ENCODE measurements at regions of chr12 and their contacts with region 1.

Region 1: DNA sequence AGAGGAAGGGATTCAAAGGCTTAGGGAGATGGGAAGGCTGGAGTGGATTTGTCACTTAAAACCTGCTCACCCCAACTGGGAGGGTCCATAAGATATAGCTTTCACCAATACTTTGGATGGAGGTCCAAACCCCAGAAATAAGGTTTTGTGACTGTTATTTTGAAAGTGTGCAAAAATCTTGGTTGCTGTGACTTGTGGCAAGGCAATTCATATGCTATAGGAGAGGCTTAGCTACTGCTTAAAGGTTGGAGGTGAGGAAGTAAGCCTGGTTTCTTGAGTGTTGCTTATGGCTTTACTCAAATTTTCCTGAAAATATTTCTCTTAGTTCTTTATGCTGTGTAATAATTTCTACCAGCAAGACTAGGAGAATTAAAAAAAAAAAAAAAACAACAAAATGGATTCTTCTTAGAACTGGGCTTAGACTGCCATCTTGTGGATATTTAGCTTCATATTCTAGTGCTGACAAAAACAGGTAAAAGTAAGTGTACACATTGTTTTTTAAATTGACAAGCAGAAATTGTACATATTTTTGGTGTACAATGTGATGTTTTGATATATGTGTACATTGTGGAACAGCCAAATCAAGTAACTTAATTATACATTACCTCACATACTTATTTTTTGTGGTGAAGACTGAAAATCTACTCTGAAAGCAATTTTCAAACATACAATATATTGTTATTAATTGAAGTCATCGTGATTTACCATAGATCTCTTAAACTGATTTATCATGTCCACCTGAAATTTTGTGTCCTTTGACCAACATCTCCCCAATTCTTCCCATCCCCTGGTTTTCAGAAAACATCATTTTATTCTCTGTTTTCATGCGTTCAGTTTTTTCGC is 23.0 kb downstream of the PDE6H start:
- DNase-seq: no peak
- H3K4me3 ChIP-seq: no peak overlapping the region
- H3K27ac ChIP-seq: no peak overlapping the region
- H3K4me1 ChIP-seq: peaks cover 9% of the 10 kb centered on the region
- H3K27me3 ChIP-seq: no peaks in the 10 kb centered on the region
- CTCF ChIP-seq: peak; percentile 75

Region 2: DNA sequence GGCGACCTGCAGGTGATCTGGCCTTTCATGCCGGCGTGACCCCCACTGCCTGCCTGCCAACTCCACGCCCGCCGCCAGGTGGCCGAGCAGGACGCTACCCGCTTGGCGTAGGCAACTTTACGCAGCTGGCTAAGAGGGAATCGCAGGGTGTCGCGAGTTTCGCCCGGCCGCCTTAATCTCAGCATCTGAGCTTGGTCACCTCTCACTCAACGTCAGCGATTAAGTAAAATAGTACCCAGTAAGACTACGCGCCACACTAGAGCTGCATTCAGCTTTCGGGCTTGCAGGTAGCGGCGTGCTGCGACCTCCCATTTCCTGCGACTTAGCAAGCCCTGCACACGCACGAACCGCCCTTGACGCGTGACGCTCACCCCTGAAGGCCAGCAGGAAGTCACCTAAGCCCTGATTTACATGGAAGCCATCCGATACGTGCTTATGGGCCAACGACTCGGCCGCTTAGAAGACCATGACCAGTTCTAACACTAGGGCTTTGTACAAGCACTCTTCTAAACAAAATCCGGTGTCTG is 225.8 kb before region 1 on chr12:
- intact Hi-C with region 1: loop called (anchors 5 kb)
- DNase-seq: peak; percentile 77
- H3K4me3 ChIP-seq: peak overlapping the region; percentile 77
- H3K27ac ChIP-seq: peak overlapping the region; percentile 95
- H3K4me1 ChIP-seq: peaks cover 55% of the 10 kb centered on the region
- H3K27me3 ChIP-seq: no peaks in the 10 kb centered on the region
- CTCF ChIP-seq: peak; percentile 86

Region 3: DNA sequence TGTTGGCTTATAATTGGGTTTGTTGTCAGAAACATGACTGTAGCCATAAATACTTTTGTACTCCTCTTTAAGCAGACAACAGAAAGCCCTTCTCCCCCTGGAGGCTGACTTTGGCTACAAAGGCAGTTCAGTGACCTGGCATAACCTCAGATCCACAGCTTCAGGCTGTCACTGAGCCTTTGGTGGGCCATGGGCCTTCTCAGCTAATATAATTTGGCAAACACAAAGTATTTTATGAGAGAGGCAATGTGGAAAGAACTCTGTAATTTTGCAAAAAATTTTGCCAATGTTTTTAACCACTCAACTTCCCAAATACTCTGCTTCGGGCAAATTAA is 94.6 kb before region 1 on chr12:
- intact Hi-C with region 1: no loop called
- DNase-seq: peak; percentile 35
- H3K4me3 ChIP-seq: no peak overlapping the region
- H3K27ac ChIP-seq: peak overlapping the region; percentile 83
- H3K4me1 ChIP-seq: peaks cover 70% of the 10 kb centered on the region
- H3K27me3 ChIP-seq: no peaks in the 10 kb centered on the region
- CTCF ChIP-seq: peak; percentile 50

Measured in left ventricle myocardium inferior (tissue), 1 donor.